ENCODE measurements at regions of chr10 and their contacts with region 1.

Region 1: GRCh38 chr10:101018600-101019439 is 12.1 kb downstream of the PDZD7 start:
- DNase-seq: peak; percentile 93
- ATAC-seq: peak; percentile 87
- H3K4me3 Mint-ChIP-seq: no peak overlapping the region
- H3K27ac Mint-ChIP-seq: no peak overlapping the region
- H3K4me1 Mint-ChIP-seq: peaks cover 12% of the 10 kb centered on the region
- H3K27me3 Mint-ChIP-seq: peaks cover 37% of the 10 kb centered on the region

Region 2: DNA sequence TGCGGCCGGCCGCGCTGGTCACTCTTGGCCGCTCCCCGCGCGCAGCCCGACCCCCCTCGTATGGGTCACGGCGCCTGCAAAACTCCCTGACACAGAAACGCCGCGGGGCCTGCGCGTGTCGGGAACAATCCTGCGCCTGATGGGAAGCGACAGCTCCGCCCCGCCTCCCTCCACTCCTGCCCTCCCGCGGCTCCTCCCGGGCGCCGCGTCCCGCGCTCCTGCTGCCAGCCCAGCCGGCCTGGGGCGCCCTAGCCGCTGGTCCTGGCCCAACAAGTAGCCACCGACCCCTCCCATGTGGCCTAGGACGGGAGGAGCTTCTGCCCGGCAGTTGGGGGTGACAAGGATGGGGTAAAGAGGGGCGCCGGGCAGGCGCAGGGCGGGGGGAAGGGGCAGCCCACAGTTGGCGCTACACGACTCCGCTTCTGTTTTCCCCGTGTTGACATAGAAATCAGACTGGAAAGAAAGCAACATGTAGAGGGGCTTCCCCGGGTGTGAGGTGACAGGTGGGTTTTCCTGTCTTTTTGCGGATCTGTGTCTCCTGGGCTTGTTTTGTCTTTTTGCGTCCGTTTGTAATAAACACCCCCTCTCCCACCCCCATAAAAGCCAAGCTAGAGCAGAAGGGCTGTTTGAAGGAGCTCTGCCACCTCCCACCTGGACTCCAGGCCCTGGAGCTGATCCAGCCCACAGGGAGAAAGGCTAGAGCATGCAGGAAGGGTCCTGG is 308.5 kb before region 1 on chr10:
- CTCF ChIA-PET with region 1: no interaction called
- POLR2A ChIA-PET with region 1: no interaction called
- intact Hi-C with region 1: no loop called
- DNase-seq: no peak
- ATAC-seq: no peak
- H3K4me3 Mint-ChIP-seq: no peak overlapping the region
- H3K27ac Mint-ChIP-seq: no peak overlapping the region
- H3K4me1 Mint-ChIP-seq: peaks cover 4% of the 10 kb centered on the region
- H3K27me3 Mint-ChIP-seq: peaks cover 69% of the 10 kb centered on the region

Region 3: GRCh38 chr10:100890673-100891317 is 128.0 kb before region 1 on chr10:
- CTCF ChIA-PET with region 1: no interaction called
- POLR2A ChIA-PET with region 1: no interaction called
- intact Hi-C with region 1: no loop called
- DNase-seq: no peak
- ATAC-seq: no peak
- H3K4me3 Mint-ChIP-seq: no peak overlapping the region
- H3K27ac Mint-ChIP-seq: no peak overlapping the region
- H3K4me1 Mint-ChIP-seq: peaks cover 4% of the 10 kb centered on the region
- H3K27me3 Mint-ChIP-seq: peaks cover 21% of the 10 kb centered on the region

Region 4: DNA sequence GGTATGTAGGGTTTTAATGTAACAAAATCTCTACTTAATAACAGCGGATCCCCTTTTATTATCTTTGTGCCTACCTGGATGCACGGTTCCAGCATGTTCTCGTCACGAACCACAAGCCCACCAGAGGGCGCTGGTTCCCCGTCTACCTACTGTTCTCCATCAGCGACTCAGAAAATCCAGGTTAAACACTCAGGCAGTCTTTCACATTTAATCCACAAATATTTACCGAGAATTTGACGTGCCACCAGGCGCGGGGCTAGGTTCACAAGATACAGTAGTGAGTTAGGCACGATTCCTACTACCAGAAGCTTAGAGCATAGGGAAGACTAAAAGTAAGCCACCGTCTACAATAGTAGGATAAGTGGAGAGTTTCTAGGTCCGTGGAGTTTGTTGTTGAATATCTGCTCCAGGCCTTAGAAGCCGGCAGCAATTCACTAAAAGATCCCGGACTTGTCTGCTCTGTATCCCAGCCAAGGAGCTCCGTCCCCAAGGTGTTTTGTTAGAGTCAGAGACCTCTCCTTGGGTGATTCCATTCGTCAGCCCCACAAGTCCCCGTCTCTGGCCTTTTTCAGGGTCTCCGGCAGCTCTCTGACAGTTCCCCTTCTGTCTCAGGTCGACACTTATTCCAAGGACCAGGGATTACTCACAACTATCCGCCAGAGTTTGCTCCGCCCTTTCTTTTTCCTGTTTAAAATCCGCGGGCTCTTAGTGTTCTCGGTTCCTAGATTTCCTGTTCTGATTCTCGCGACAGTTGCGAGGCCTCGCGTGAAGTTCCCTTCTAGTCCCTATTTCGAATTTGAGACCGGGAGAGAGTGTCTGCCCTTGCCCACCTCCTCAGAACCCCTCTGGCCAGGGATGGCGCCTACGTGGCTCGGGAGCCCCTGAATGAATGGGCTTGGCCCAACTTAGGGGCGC is 41.5 kb after region 1 on chr10:
- CTCF ChIA-PET with region 1: interaction called, 17 read pairs
- POLR2A ChIA-PET with region 1: no interaction called
- intact Hi-C with region 1: loop called in 1 of 2 experiments (anchors 10 kb)
- DNase-seq: peak; percentile 95
- ATAC-seq: peak; percentile 75
- H3K4me3 Mint-ChIP-seq: peak overlapping the region; percentile 82
- H3K27ac Mint-ChIP-seq: peak overlapping the region; percentile 96
- H3K4me1 Mint-ChIP-seq: peaks cover 22% of the 10 kb centered on the region
- H3K27me3 Mint-ChIP-seq: peaks cover 22% of the 10 kb centered on the region

Region 5: DNA sequence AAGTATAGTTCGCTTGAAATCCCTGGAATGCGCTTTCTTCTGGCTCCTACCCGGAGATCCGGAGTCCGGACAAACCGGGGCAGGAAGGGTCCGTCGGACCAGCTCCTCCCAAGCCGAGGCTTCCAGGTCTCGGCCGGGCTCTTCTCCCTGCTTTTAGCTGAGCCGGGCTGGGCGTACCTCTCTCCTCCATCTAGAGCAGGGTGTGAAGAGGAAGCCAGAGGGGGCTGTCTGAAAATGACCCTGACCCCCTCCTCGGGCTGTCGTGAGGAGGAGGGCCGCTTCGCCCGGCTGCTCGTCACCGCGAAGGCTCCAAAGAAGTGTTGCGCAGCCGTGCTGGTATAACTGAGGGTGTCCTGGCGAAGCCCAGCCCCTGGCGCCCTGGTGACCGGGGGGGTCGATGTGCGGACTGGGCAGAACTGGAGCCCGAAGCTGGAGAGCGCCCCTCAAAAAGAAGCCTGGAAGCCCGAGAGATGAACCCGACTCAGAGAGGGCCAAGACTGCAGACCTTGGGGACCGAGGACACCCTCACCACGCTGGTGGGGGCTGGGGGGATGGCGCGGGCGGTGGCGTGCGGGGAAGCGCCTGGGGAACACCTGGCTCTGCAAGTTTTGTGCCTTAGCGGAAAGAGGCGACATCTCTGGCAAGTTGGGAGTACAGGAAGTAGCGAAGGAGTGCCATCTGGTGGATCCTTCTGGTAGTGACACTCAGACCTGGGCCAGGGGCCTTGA is 48.7 kb after region 1 on chr10:
- CTCF ChIA-PET with region 1: interaction called, 13 read pairs
- POLR2A ChIA-PET with region 1: no interaction called
- intact Hi-C with region 1: loop called (anchors 1 to 10 kb)
- DNase-seq: peak; percentile 87
- ATAC-seq: peak; percentile 74
- H3K4me3 Mint-ChIP-seq: peak overlapping the region; percentile 72
- H3K27ac Mint-ChIP-seq: peak overlapping the region; percentile 25
- H3K4me1 Mint-ChIP-seq: peaks cover 28% of the 10 kb centered on the region
- H3K27me3 Mint-ChIP-seq: peaks cover 30% of the 10 kb centered on the region